Aorta (tissue), 5 donors: ENCODE measurements at regions of chr9 and their contacts with region 1.

Region 1: DNA sequence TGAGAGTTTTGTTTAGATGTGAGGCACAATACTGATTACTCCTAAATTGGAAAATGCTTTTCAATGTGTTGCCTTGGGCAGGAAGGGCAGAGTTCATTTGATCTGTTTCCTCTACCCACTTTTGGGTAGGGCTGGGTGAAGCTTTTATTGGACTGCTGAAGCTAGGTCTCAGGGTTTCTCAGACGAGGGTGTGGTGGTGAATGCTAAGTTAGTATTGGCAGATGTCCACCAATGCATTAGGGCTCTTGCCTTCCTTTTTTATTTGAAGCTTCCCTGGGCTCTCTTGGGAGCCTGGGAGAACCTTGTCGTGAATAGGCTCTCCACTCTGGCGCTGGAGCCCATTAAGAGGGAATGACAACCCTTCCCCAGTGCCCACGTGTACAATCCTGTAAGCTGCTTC is 23.1 kb downstream of the SPTAN1 start:
- DNase-seq: no peak
- ATAC-seq: peak; percentile 65
- H3K4me3 ChIP-seq: no peak overlapping the region
- H3K27ac ChIP-seq: no peak overlapping the region
- H3K4me1 ChIP-seq: no peaks in the 10 kb centered on the region
- H3K27me3 ChIP-seq: no peaks in the 10 kb centered on the region

Region 2: GRCh38 chr9:128470560-128470959 is 104.9 kb before region 1 on chr9:
- intact Hi-C with region 1: no loop called
- DNase-seq: peak in 1 of 2 donors; percentile 65
- ATAC-seq: no peak
- H3K4me3 ChIP-seq: no peak overlapping the region
- H3K27ac ChIP-seq: no peak overlapping the region
- H3K4me1 ChIP-seq: no peaks in the 10 kb centered on the region
- H3K27me3 ChIP-seq: no peaks in the 10 kb centered on the region

Region 3: DNA sequence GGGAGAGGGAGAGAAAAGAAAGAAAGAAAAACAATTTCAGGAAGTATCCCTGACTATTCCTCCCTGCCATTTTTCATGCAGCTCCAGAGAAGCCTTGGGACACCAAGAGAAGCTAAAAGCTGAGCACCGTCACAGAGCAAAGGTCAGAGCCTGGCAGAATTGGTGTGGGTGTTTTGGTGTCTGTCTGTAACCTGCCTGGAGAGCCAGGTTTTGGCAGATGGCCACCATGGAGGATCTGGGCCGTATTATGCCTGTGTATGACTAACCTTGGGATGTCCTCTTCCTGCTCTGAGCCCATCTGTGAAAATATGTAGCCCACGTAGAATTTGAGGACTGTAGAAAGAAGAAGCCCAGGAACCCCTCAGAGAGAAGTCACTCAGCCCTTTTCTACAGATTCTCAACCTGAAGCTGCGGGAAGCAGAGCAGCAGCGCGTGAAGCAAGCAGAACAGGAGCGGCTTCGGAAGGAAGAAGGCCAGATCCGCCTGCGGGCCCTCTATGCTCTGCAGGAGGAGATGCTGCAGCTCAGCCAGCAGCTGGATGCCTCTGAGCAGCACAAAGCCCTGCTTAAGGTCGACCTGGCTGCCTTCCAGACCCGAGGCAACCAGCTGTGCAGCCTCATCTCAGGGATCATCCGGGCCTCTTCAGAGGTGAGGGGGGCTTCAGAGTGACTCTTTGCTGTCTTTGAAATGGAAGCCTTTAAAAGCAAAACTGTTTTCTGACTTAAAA is 52.1 kb before region 1 on chr9:
- intact Hi-C with region 1: no loop called
- DNase-seq: no peak
- ATAC-seq: no peak
- H3K4me3 ChIP-seq: no peak overlapping the region
- H3K27ac ChIP-seq: no peak overlapping the region
- H3K4me1 ChIP-seq: no peaks in the 10 kb centered on the region
- H3K27me3 ChIP-seq: no peaks in the 10 kb centered on the region

Region 4: GRCh38 chr9:128558431-128559310 is 16.8 kb before region 1 on chr9:
- intact Hi-C with region 1: loop called in 1 of 2 experiments (anchors 2 kb)
- DNase-seq: peak; percentile 91 to 93
- ATAC-seq: peak; percentile 83
- H3K4me3 ChIP-seq: peak overlapping the region in 1 of 2 donors; percentile 6
- H3K27ac ChIP-seq: peak overlapping the region in 1 of 2 donors; percentile 94
- H3K4me1 ChIP-seq: peaks cover 2 to 13% of the 10 kb centered on the region in 2 donors
- H3K27me3 ChIP-seq: no peaks in the 10 kb centered on the region

Region 5: GRCh38 chr9:129081388-129081904 is 506.0 kb after region 1 on chr9:
- intact Hi-C with region 1: no loop called
- DNase-seq: no peak
- ATAC-seq: no peak
- H3K4me3 ChIP-seq: peak overlapping the region; percentile 63 to 70
- H3K27ac ChIP-seq: no peak overlapping the region
- H3K4me1 ChIP-seq: no peaks in the 10 kb centered on the region
- H3K27me3 ChIP-seq: no peaks in the 10 kb centered on the region

Region 6: DNA sequence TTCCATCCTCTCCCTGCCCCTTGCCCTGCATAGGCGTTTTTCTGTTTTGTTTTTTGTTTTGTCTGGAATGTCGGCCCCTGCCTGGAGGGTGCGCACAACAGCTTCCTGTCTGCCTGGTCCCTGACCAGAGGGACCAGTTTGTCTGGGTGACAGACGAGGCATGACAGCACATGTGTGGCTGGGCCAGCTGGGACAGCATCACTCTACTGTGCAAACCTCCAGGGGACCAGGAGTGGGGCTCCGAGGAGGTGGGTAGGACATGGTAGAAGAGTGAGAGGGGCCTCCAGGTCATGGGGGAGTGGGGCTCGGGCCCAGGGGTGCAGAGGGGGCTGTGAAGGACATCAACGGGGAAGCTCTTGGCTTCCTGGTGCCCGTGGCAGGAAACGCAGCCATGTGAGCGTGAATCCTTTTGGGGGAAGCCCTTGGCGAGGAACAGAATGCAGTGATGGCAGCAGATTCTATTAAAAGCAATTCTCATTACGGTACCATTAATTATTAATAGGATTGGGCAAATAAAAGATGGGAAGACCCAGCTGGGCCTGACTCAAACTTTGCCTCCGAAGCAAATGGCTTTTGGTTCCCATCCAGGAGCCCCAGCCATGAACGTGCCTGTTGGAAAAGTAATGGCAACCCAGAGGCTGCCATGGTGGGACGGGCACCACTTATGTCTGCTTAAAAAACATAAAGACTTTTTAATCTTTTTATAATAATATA is 787.0 kb after region 1 on chr9:
- intact Hi-C with region 1: no loop called
- DNase-seq: peak in 1 of 2 donors; percentile 45
- ATAC-seq: no peak
- H3K4me3 ChIP-seq: no peak overlapping the region
- H3K27ac ChIP-seq: no peak overlapping the region
- H3K4me1 ChIP-seq: no peaks in the 10 kb centered on the region
- H3K27me3 ChIP-seq: no peaks in the 10 kb centered on the region